ENCODE measurements at regions of chr6 and their contacts with region 1.

Region 1: DNA sequence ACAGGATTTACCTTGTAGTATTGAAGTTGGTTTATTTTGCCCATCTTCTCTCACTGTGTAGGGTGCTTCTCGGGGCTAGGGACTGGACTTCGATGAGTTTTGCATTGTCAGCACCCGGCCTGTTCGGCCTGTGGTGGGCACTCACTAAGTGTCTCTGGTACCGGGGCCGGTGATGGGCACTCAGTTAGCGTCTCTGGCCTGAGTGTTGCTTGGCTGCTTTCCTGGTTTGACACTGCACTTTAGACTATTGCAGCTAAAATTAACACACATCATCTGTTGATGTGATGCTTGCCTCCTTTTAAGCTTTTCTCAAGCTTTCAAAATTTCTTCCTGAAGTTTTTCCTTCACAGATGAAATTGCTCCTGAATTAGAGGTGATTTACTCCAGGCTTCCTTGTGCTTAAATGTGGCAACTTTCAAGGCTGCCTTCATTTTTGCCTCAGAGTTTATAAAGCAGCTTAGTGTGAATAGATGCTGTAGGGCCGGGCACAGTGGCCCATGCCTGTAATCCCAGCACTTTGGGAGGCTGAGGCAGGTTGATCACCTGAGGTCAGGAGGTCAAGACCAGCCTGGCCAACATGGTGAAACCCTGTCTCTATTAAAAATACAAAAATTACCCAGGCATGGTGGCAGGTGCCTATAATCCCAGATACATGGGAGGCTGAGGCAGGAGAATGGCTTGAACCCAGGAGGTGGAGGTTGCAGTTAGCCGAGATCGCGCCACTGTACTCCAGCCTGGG is 41.7 kb upstream of the TULP4 start:
- DNase-seq: peak in 1 of 14 experiments; percentile 8
- ATAC-seq: no peak
- H3K4me3 ChIP-seq: no peak overlapping the region
- H3K4me3 Mint-ChIP-seq: peak overlapping the region; percentile 21
- H3K27ac ChIP-seq: peak overlapping the region; percentile 10 to 30
- H3K27ac Mint-ChIP-seq: peak overlapping the region; percentile 74
- H3K4me1 ChIP-seq: peaks cover 16% of the 10 kb centered on the region
- H3K4me1 Mint-ChIP-seq: peaks cover 34% of the 10 kb centered on the region
- H3K27me3 ChIP-seq: no peaks in the 10 kb centered on the region
- H3K27me3 Mint-ChIP-seq: no peaks in the 10 kb centered on the region
- CTCF ChIP-seq: no peak

Region 2: DNA sequence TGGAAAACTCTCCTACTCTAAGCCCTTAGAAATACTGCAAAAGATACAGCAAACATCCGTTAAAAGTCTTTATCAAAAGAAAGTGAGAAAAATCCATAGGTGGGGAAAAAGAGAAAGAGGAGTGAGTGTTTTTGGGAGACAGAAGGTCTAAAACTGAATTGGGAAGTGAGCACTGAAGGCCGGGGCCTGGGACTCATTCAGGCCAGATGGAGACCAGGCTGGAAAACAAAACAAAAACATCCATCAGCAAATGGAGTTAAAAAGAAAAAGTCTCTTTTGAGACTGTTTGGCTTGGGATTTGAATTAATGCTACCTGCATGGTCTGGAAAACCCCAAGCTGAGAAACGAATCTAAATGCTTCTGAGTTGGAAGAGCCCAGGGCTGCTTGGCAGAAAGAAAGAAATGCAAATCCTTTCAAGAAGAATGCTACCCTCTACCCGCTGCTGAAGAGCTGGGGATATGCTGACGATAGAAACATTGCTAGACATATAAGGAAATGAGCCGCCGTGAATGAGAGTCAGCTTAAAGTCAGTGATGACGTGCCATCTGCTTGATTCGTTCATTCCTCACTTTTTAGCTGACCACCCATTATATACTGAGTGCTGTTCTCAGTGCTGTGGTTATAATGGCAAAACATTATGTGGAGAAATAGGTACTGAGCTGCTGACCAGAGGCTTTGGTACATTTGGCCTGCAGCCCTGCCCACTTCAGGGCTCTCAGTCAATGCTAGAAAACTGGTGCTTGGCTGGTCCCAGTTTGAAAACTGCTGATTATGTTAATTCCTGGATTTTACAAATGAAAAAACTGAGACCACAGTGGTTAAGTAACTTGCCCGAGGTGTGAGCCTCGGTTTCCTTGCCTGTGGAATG is 13.7 kb after region 1 on chr6:
- CTCF ChIA-PET with region 1: no interaction called
- POLR2A ChIA-PET with region 1: interaction called, 10 read pairs
- intact Hi-C with region 1: no loop called
- DNase-seq: peak in 4 of 14 experiments; percentile 25 to 71 (median 62)
- ATAC-seq: peak; percentile 78
- H3K4me3 ChIP-seq: no peak overlapping the region
- H3K4me3 Mint-ChIP-seq: peak overlapping the region; percentile 52
- H3K27ac ChIP-seq: peak overlapping the region in 1 of 2 donors; percentile 69
- H3K27ac Mint-ChIP-seq: peak overlapping the region; percentile 77
- H3K4me1 ChIP-seq: peaks cover 31% of the 10 kb centered on the region
- H3K4me1 Mint-ChIP-seq: peaks cover 54% of the 10 kb centered on the region
- H3K27me3 ChIP-seq: no peaks in the 10 kb centered on the region
- H3K27me3 Mint-ChIP-seq: no peaks in the 10 kb centered on the region
- CTCF ChIP-seq: no peak

Region 3: DNA sequence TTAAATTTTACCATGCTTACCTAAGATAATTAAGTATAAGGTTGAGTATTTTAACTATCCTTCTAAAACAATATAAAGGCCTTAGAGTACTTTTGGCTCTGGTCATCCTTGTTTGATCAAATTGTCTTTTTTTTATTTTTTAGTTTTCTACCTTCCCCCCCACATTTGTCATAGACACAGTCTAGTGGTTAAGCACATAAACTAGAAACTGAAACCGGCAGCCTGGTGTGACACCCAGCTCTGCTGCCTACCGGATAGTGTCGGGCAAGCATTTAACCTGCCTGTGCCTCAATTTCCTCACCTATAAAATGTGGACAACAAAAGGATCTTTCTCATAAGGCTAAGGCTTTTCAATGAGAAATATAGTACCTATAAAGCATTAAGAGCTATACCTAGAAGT is 20.1 kb after region 1 on chr6:
- CTCF ChIA-PET with region 1: interaction called, 3 read pairs
- POLR2A ChIA-PET with region 1: interaction called, 10 read pairs
- intact Hi-C with region 1: loop called in 1 of 2 experiments (anchors 1 kb)
- DNase-seq: peak; percentile 33 to 88 (median 45)
- ATAC-seq: peak; percentile 98
- H3K4me3 ChIP-seq: peak overlapping the region; percentile 4
- H3K4me3 Mint-ChIP-seq: peak overlapping the region; percentile 80
- H3K27ac ChIP-seq: peak overlapping the region; percentile 36 to 42
- H3K27ac Mint-ChIP-seq: peak overlapping the region; percentile 91
- H3K4me1 ChIP-seq: peaks cover 9% of the 10 kb centered on the region
- H3K4me1 Mint-ChIP-seq: peaks cover 56% of the 10 kb centered on the region
- H3K27me3 ChIP-seq: no peaks in the 10 kb centered on the region
- H3K27me3 Mint-ChIP-seq: no peaks in the 10 kb centered on the region
- CTCF ChIP-seq: no peak

Region 4: DNA sequence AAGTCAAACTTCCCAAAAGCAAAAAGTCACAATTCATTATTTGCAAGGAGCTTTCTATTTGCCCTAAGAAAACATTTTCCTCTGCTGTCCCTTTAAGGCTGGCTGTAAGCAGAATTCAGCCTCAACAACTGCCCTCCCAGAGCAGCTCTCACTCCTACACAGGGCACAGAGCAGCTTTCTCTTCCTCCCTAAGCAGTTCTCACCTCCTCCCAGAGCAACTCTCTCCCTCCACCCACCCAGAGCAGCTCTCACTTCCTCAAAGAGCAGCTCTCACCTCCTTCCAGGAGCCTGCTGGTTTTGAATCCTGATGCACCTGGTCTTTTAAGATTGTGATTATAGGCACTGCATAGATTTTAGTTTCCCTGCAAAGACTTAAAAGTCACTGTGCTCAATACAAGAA is 168.7 kb after region 1 on chr6:
- CTCF ChIA-PET with region 1: no interaction called
- POLR2A ChIA-PET with region 1: no interaction called
- intact Hi-C with region 1: no loop called
- DNase-seq: no peak
- ATAC-seq: no peak
- H3K4me3 ChIP-seq: no peak overlapping the region
- H3K4me3 Mint-ChIP-seq: no peak overlapping the region
- H3K27ac ChIP-seq: no peak overlapping the region
- H3K27ac Mint-ChIP-seq: no peak overlapping the region
- H3K4me1 ChIP-seq: no peaks in the 10 kb centered on the region
- H3K4me1 Mint-ChIP-seq: peaks cover 3% of the 10 kb centered on the region
- H3K27me3 ChIP-seq: no peaks in the 10 kb centered on the region
- H3K27me3 Mint-ChIP-seq: no peaks in the 10 kb centered on the region
- CTCF ChIP-seq: no peak